CD4-positive, alpha-beta memory T cell (primary cell): ENCODE measurements at regions of chr17 and their contacts with region 1.

Region 1: DNA sequence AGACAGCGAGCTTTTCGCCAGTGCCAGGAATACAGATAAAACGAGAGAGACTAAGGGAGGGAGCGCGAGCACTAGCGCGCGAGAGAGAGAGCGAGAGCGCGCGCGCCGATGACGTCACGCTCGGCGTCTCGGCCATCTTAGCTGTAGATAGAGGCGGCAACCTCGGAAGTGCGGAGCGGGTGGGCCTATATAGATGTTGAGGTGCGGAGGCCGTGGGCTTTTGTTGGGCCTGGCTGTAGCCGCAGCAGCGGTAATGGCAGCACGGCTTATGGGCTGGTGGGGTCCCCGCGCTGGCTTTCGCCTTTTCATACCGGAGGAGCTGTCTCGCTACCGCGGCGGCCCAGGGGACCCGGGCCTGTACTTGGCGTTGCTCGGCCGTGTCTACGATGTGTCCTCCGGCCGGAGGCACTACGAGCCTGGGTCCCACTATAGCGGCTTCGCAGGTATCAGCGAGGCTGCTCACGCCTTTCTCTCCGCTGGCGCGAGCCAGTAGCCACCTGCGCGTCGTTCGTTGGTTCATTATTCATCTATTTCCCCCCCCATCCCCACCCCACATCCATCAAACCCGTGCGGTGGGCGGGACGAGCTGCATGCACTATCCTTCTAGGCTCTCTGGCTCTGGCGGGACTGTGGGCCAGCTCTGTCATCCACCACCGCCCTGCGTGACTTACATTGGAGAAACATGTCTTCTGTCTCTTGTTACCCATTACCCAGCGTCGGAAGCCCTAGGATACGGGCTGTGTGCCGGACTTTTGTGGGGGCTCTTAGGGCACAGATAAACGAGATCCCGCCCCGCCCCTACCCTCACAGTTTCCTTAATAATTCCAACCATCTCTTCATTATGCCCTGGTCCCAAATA is 795 bp downstream of the CYB5D2 start:
- DNase-seq: peak; percentile 89 to 94 (median 93)
- H3K4me3 ChIP-seq: peak overlapping the region; percentile 40 to 96
- H3K4me3 Mint-ChIP-seq: peak overlapping the region; percentile 99 to 100 (median 99)
- H3K27ac ChIP-seq: peak overlapping the region; percentile 100
- H3K27ac Mint-ChIP-seq: peak overlapping the region; percentile 100
- H3K4me1 ChIP-seq: peaks cover 49% of the 10 kb centered on the region
- H3K4me1 Mint-ChIP-seq: peaks cover 33 to 66% (median 46%) of the 10 kb centered on the region in 4 donors
- H3K27me3 ChIP-seq: no peaks in the 10 kb centered on the region
- H3K27me3 Mint-ChIP-seq: no peaks in the 10 kb centered on the region

Region 2: DNA sequence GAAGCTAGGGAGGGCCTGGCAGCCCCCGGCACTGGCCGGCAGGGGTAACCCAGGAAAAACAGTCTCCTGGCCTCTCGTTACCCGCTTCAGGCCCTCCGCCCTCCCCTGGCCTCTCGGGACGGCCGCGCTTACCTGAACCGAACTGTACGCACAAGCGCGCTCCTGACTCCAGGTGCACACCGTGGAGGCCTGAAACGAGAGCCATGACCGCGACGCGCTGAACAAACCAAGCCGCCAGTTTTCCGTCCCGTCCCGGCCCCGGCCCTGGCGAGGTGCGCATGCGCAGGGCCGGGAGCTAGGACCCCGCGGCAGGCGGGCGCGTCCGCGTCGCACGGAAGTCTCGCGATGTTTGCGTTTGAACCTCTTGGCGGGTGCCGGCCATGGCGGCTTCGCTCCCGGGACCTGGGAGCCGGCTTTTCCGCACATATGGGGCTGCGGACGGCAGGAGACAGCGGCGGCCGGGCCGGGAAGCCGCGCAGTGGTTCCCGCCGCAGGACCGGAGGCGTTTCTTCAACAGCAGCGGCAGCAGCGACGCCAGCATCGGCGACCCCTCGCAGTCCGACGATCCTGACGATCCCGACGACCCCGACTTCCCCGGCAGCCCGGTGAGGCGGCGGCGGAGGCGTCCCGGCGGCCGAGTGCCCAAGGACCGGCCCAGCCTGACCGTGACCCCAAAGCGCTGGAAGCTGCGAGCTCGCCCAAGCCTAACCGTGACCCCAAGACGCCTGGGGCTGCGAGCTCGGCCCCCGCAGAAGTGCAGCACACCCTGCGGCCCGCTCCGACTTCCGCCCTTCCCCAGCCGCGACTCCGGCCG is 420.0 kb before region 1 on chr17 and contains the start of gene HASPIN:
- CTCF ChIA-PET with region 1: no interaction called
- POLR2A ChIA-PET with region 1: interaction called, 4 read pairs
- intact Hi-C with region 1: loop called (anchors 10 kb)
- DNase-seq: peak; percentile 88 to 92 (median 91)
- H3K4me3 ChIP-seq: peak within 1 kb of the TSS; percentile 59 to 95
- H3K4me3 Mint-ChIP-seq: peak within 1 kb of the TSS; percentile 86 to 95 (median 94)
- H3K27ac ChIP-seq: peak within 1 kb of the TSS; percentile 74
- H3K27ac Mint-ChIP-seq: peak within 1 kb of the TSS; percentile 75 to 95 (median 93)
- H3K4me1 ChIP-seq: peaks cover 36% of the 10 kb centered on the region
- H3K4me1 Mint-ChIP-seq: peaks cover 15 to 44% (median 28%) of the 10 kb centered on the region in 4 donors
- H3K27me3 ChIP-seq: no peaks in the 10 kb centered on the region
- H3K27me3 Mint-ChIP-seq: no peaks in the 10 kb centered on the region
- total RNA-seq, gene HASPIN: 0.28 to 0.41 TPM

Region 3: DNA sequence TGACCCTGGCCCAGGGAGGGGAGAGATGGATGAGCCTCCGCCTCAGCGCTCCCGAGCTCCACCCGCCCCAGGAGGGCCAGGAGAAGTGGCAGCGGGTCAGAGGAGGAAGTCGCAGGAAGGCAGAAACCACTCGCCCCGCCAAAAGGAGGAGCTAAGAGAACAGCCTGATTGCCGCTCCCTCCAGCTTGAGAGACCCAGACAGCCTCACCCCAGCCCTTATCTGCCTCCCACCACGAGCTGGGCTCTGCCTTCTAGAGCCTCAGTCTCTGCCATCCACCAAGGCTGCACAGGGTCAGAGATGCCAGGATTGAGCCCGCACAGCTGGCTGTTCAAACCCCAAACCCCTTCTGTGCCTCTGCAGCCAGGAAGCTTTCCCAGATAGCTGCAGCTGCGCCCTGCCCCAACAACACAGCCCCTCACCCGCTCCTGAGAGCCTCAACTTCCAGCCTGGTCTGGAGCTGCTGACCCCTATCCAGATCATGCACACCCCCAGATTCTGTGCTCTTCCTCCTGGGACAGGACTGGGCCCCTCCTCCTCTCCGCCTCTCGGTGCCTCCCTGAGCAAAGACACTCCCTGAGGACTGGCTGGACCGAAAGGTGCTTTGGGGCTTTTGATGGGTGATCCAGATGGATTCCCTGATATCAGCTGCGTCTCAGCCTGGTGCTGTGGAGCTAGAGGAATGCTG is 178.5 kb before region 1 on chr17:
- CTCF ChIA-PET with region 1: no interaction called
- POLR2A ChIA-PET with region 1: interaction called, 13 read pairs
- intact Hi-C with region 1: no loop called
- DNase-seq: peak; percentile 58 to 82 (median 65)
- H3K4me3 ChIP-seq: peak overlapping the region; percentile 76 to 80
- H3K4me3 Mint-ChIP-seq: peak overlapping the region; percentile 90 to 94 (median 93)
- H3K27ac ChIP-seq: peak overlapping the region; percentile 77
- H3K27ac Mint-ChIP-seq: peak overlapping the region; percentile 87 to 98 (median 96)
- H3K4me1 ChIP-seq: peaks cover 37% of the 10 kb centered on the region
- H3K4me1 Mint-ChIP-seq: peaks cover 26 to 43% (median 35%) of the 10 kb centered on the region in 4 donors
- H3K27me3 ChIP-seq: no peaks in the 10 kb centered on the region
- H3K27me3 Mint-ChIP-seq: no peaks in the 10 kb centered on the region

Region 4: GRCh38 chr17:4118015-4118743 is 25.6 kb before region 1 on chr17:
- CTCF ChIA-PET with region 1: no interaction called
- POLR2A ChIA-PET with region 1: interaction called, 13 read pairs
- intact Hi-C with region 1: no loop called
- DNase-seq: no peak
- H3K4me3 ChIP-seq: no peak overlapping the region
- H3K4me3 Mint-ChIP-seq: no peak overlapping the region
- H3K27ac ChIP-seq: no peak overlapping the region
- H3K27ac Mint-ChIP-seq: peak overlapping the region in 3 of 7 donors; percentile 8 to 80 (median 54)
- H3K4me1 ChIP-seq: no peaks in the 10 kb centered on the region
- H3K4me1 Mint-ChIP-seq: peaks cover 2 to 15% (median 4%) of the 10 kb centered on the region in 4 donors
- H3K27me3 ChIP-seq: no peaks in the 10 kb centered on the region
- H3K27me3 Mint-ChIP-seq: no peaks in the 10 kb centered on the region

Region 5: DNA sequence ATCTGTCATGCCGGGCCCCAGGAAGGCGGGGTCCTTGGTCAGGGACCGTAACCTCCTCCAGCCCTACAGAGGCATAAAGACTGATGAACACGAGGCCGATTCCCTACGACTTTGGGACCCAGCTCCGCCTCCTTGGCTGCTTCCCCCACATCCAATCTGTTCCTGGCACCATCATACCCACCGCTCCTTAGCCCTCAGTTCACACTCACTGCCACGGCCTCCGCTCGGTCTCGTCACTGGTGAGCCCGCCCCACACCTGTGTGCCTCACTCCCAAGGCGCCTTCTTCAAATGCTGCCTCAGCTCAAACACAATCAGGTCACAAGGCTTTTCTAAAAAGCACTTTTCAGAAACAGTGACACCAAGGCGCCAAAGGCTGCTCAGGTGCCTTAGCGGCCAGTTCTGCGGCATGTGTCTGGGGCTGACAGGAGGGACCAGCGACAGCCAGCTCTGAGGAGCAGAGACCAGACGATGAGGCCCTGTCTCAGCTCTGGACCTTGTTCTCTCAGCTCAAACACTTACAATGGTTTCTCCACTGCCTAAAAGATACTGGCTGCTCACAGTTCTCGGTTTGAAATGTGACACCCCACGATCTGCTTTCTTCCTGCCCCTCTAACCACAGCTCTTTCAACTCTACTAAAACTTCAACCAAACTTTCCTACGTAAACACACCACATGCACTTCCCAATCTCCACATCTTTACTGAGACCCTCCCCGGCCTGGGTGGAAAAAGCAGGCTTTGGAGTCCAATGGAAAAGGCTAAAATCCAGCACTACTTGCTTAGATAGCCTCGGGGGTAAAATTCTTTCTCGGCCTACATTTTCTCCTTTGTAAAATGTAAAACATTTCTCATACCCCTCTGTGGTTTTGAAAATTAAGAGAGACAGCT is 32.4 kb after region 1 on chr17:
- CTCF ChIA-PET with region 1: interaction called, 5 read pairs
- POLR2A ChIA-PET with region 1: interaction called, 121 read pairs
- intact Hi-C with region 1: loop called (anchors 1 kb)
- DNase-seq: peak; percentile 58 to 68 (median 63)
- H3K4me3 ChIP-seq: peak overlapping the region; percentile 1 to 47
- H3K4me3 Mint-ChIP-seq: peak overlapping the region; percentile 74 to 91 (median 82)
- H3K27ac ChIP-seq: peak overlapping the region; percentile 74
- H3K27ac Mint-ChIP-seq: peak overlapping the region; percentile 86 to 99 (median 98)
- H3K4me1 ChIP-seq: peaks cover 54% of the 10 kb centered on the region
- H3K4me1 Mint-ChIP-seq: peaks cover 41 to 64% (median 46%) of the 10 kb centered on the region in 4 donors
- H3K27me3 ChIP-seq: no peaks in the 10 kb centered on the region
- H3K27me3 Mint-ChIP-seq: no peaks in the 10 kb centered on the region

Region 6: DNA sequence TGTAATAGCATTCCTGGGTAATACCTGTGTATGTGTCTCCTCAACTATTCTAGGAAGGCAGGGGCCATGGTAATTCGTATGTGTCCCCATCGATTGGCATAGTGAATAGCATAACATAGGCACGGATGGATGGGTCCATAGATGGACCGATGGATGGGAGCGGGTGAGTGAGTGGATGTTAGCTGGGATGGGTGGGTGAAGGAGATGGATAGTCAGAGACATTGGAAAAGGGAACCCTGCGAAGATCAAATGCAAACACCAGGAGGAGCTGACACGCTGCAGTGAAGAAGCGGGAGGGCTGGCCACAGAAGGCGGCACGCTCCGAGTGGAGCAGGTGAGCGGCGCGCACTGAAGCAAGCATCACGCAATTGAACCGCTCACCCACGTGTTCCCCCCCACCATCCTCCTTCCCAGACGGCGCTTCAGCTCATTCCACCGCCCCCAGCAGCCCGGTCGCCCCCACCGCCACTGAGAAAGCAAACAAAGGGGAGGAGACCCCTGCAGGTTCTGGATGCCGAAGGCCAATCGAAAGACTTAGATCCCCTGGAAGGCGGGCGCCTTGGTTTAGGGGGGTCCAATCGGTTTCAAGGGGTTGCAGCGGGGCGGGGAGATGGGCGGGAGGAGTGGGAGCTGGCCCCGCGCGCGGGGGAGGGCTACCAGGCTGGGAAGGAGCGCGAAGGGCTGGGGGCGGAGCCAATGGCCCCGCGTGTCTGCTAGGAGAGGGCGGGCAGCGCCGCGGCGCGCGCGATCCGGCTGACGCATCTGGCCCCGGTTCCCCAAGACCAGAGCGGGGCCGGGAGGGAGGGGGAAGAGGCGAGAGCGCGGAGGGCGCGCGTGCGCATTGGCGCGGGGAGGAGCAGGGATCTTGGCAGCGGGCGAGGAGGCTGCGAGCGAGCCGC is 566.3 kb after region 1 on chr17 and contains the start of gene ARRB2:
- CTCF ChIA-PET with region 1: no interaction called
- POLR2A ChIA-PET with region 1: interaction called, 6 read pairs
- intact Hi-C with region 1: loop called (anchors 2 kb)
- DNase-seq: peak; percentile 98 to 99 (median 99)
- H3K4me3 ChIP-seq: peak within 1 kb of the TSS; percentile 85 to 89
- H3K4me3 Mint-ChIP-seq: peak within 1 kb of the TSS; percentile 85 to 98 (median 96)
- H3K27ac ChIP-seq: peak within 1 kb of the TSS; percentile 79
- H3K27ac Mint-ChIP-seq: peak within 1 kb of the TSS; percentile 86 to 98 (median 91)
- H3K4me1 ChIP-seq: peaks cover 40% of the 10 kb centered on the region
- H3K4me1 Mint-ChIP-seq: peaks cover 34 to 72% (median 45%) of the 10 kb centered on the region in 4 donors
- H3K27me3 ChIP-seq: no peaks in the 10 kb centered on the region
- H3K27me3 Mint-ChIP-seq: no peaks in the 10 kb centered on the region
- total RNA-seq, gene ARRB2: 340 to 341 TPM